Left lung (tissue), 14 donors: ENCODE measurements at regions of chr18 and their contacts with region 1.

Region 1: GRCh38 chr18:3665780-3666525 is 216.0 kb downstream of the TGIF1 start:
- DNase-seq: peak; percentile 78 to 88 (median 84)
- ATAC-seq: peak; percentile 96
- H3K4me3 ChIP-seq: no peak overlapping the region
- H3K27ac ChIP-seq: peak overlapping the region; percentile 31 to 56
- H3K4me1 ChIP-seq: peaks cover 0 to 27% of the 10 kb centered on the region in 2 donors
- H3K27me3 ChIP-seq: no peaks in the 10 kb centered on the region
- CTCF ChIP-seq: peak; percentile 95 to 97

Region 2: GRCh38 chr18:3281456-3282400 is 384.2 kb before region 1 on chr18:
- intact Hi-C with region 1: loop called (anchors 5 to 10 kb)
- DNase-seq: peak in 2 of 4 donors; percentile 75 to 77
- ATAC-seq: peak; percentile 92
- H3K4me3 ChIP-seq: no peak overlapping the region
- H3K27ac ChIP-seq: peak overlapping the region in 1 of 2 donors; percentile 40
- H3K4me1 ChIP-seq: peaks cover 0 to 19% of the 10 kb centered on the region in 2 donors
- H3K27me3 ChIP-seq: no peaks in the 10 kb centered on the region
- CTCF ChIP-seq: peak; percentile 54 to 59

Region 3: DNA sequence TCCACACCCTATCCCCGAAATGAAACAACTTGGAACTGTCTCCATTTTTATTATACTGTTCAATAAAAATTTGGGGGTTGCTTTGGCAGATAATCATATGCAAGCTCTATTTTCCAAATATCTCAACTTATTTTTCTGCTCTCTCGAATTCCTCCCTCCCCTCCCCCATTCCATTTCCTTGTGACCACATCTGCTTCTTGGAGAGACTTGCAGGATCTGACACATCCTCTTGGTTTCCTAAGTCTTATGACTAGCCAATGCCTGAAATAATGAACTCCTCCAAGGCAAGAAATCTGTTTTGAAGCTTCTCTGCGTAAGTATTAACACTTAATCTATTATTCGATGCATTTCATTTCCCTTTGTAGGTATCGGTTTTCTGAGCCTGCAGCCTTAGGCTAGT is 199.9 kb before region 1 on chr18:
- intact Hi-C with region 1: loop called in 1 of 2 experiments (anchors 10 kb)
- DNase-seq: peak in 1 of 4 donors; percentile 41
- ATAC-seq: peak; percentile 65
- H3K4me3 ChIP-seq: no peak overlapping the region
- H3K27ac ChIP-seq: peak overlapping the region; percentile 8 to 44
- H3K4me1 ChIP-seq: peaks cover 0 to 18% of the 10 kb centered on the region in 2 donors
- H3K27me3 ChIP-seq: no peaks in the 10 kb centered on the region
- CTCF ChIP-seq: no peak

Region 4: GRCh38 chr18:3585656-3586509 is 80.1 kb before region 1 on chr18:
- intact Hi-C with region 1: loop called in 1 of 2 experiments (anchors 5 kb)
- DNase-seq: peak; percentile 54 to 88 (median 80)
- ATAC-seq: peak; percentile 98
- H3K4me3 ChIP-seq: no peak overlapping the region
- H3K27ac ChIP-seq: no peak overlapping the region
- H3K4me1 ChIP-seq: peaks cover 0 to 12% of the 10 kb centered on the region in 2 donors
- H3K27me3 ChIP-seq: no peaks in the 10 kb centered on the region
- CTCF ChIP-seq: peak; percentile 64 to 68

Region 5: DNA sequence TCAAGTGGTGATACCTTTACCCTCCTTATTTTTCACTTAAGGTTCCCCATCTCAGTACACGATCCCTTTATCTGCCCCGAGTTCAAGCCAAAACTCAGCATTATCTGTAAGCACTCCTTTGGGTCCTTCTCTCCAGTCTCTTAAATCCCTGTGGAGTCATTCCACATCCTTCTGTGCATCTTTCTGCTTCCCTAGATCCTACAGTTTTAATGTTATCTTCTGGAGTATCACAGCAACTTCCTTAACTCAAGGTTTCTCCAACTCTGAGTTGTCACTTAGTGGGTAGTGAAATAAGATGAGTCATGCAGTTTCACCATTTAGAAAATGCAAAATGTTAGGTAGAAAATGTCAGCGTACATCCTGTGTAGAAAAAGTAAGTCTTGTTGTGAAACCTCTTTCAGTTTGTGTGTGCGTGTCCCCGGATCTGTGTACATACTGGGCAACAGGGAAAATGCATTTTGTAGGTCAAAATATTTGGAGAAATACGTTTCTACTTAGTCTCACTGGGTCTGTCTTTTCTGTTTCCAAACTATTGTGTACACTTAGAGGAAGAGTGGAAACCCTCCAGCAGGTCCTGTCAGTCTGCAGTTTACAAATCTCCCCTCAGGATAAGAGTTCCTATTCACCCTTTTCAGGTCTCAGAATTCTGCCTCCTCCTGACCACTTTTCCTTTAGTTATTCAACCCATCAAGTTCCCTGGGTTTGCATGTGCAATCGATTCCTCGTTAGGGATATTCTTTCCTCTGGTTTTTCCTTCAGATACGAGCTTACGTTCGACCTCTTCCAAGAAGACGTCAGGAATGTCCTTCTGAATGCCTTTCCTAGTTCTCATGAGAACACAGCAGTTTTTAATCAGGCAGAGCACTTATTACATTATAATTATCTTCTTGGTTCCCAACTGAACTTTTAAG is 61.2 kb before region 1 on chr18:
- intact Hi-C with region 1: no loop called
- DNase-seq: peak in 2 of 4 donors; percentile 56 to 59
- ATAC-seq: peak; percentile 47
- H3K4me3 ChIP-seq: peak overlapping the region in 1 of 2 donors; percentile 18
- H3K27ac ChIP-seq: peak overlapping the region; percentile 94 to 95
- H3K4me1 ChIP-seq: peaks cover 19 to 49% of the 10 kb centered on the region in 2 donors
- H3K27me3 ChIP-seq: no peaks in the 10 kb centered on the region
- CTCF ChIP-seq: no peak

Region 6: DNA sequence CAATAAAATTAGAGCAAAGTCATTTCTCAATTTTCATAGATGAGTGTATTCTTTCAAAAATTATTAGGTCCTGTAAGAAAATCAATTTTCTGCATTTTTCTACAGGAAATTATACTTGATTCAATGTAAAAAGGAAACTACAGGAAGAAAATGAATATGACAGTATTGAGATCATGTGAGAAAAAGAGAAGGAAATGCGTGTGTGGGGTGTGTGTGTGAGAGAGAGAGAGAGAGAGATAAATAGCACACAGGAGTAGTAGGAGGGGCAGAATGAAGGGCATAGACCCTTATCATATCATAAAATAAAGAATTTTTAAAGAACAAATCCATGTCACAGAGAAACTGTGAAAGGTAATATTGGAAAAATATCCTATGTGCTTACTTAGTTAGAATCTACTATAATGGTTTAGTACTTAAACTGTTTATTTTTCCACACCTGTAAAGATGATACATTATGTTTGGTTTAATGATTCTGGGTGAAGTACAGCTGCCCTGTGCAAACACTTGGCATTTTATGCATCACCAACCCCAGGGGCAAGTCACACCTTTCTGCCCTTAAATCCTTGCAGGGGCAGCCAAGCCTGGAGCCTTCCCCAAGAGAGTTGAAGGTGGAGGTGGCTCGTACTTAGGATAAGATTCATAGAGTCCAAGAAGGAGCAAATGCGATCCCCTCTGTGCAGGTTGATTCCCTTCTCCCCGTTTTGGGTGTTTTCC is 60.4 kb after region 1 on chr18:
- intact Hi-C with region 1: no loop called
- DNase-seq: no peak
- ATAC-seq: peak; percentile 57
- H3K4me3 ChIP-seq: no peak overlapping the region
- H3K27ac ChIP-seq: no peak overlapping the region
- H3K4me1 ChIP-seq: peaks cover 15 to 41% of the 10 kb centered on the region in 2 donors
- H3K27me3 ChIP-seq: no peaks in the 10 kb centered on the region
- CTCF ChIP-seq: no peak

Region 7: DNA sequence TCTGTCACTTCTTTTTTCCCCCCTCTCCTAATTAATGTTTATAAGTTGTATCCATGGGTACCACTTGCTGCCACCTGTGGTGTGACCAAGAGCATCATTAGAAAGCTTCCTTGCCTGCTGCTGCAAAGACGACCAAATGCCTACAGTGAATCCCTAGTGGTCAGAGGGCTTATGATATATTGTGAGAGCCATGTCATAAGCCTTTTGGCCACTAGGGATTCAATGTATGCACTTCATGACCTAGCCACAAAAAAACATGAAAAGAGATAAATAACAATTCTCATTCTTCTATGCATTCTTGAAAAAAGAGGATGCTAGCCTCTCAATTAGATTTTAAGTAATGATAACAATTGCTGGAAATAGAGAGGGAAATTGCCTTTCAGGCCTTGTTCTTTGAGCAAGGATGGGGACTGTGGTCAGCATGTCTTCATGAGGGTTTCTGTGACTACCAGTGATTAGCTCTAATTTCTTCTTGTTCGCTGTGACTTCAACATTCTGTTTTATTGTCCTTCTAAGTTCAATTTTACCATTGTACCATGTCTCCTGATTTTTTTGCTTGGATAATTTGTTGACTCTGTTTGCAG is 219.3 kb after region 1 on chr18:
- intact Hi-C with region 1: no loop called
- DNase-seq: no peak
- ATAC-seq: no peak
- H3K4me3 ChIP-seq: no peak overlapping the region
- H3K27ac ChIP-seq: no peak overlapping the region
- H3K4me1 ChIP-seq: no peaks in the 10 kb centered on the region
- H3K27me3 ChIP-seq: no peaks in the 10 kb centered on the region
- CTCF ChIP-seq: no peak